Psoas muscle (tissue), 8 donors: ENCODE measurements at regions of chr2 and their contacts with region 1.

Region 1: DNA sequence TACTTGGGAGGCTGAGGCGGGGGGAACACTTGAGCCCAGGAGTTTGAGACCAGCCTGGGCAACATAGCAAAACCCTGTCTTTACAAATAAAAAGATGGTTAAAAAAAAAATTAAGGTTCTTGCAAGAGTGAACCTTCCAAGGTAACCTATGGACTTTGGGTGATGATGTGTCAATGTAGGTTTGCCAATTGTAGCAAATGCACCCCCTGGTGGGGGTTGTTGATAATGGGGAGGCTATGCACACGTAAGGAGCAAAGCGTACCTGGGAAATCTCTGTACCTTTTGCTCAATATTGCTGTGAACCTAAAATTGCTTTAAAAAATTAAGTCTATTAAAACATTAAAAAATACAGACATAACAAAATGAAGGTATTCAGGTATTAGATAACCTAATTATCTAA is 70.4 kb downstream of the CWC22 start:
- DNase-seq: no peak
- ATAC-seq: peak in 3 of 4 donors; percentile 36 to 77 (median 70)
- H3K4me3 ChIP-seq: no peak overlapping the region
- H3K27ac ChIP-seq: no peak overlapping the region
- H3K4me1 ChIP-seq: no peaks in the 10 kb centered on the region
- H3K27me3 ChIP-seq: no peaks in the 10 kb centered on the region
- CTCF ChIP-seq: peak; percentile 56

Region 2: DNA sequence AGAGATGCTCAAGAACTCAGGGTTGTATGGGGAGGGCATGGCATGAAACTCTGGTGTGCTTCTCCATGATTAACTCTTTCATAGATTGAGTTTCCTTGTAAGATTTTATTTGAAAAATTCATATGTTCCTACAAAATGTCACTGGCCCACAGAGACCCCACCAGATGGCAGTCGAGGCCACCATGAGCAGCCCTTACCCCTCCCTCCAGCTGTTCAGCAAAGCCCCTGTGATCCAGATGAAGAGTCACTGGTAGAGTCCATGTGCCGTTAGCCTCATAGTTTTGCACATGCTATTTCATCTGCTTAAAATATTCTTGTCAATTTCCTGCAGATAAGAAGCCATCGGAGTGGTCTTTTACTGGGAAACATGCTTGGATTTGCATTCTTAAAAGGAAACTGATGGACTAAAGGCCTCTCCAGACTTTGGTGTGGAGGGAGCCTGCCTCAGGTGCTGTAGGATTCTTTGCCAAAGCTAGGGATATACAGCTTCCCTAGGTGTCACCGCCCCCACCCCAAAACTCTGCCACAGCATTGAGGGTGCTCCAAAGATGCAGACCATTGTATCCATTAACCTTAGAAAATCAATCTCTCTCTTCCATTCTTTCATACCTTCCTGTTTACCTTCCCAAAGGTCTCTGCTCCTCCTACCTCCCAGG is 94.0 kb before region 1 on chr2:
- intact Hi-C with region 1: loop called in 1 of 2 experiments (anchors 2 kb)
- DNase-seq: peak in 1 of 2 donors; percentile 11
- ATAC-seq: peak; percentile 59 to 82 (median 72)
- H3K4me3 ChIP-seq: no peak overlapping the region
- H3K27ac ChIP-seq: no peak overlapping the region
- H3K4me1 ChIP-seq: peaks cover 5% of the 10 kb centered on the region
- H3K27me3 ChIP-seq: no peaks in the 10 kb centered on the region
- CTCF ChIP-seq: peak; percentile 46

Region 3: DNA sequence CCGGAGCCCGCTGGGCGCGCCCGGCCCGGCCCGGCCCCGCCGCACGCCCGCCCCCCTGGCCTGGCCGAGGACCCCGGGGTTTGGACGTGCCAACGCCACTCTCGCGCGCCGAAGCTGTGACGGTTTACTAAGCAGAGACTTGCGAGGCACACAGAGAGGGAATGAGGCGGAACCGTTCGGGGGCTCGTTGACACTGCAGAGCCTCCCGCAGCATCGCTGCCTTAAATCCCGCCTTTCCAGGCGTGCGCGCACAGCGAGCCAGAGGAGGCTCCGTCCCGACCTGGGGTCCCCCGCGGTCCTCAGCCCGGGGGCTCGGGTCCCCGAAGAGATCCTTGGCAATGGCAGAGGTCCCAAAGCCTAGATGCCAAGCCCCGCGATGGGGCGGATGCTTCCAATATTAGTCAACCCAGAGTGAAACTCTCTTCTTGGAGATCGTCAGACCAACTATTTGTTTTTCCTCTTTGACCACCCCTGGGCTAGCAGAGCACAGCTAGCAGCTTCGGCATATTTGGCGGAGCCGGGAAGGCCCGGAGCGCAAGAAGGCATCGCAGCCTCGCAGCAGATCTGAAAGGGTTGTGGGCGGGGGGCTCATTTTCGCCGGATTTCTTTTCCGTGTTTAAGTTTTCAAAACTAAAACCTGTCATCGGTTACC is 75.1 kb before region 1 on chr2 and contains the start of gene ZNF385B:
- intact Hi-C with region 1: loop called in 1 of 2 experiments (anchors 5 kb)
- DNase-seq: peak; percentile 14 to 58
- ATAC-seq: peak in 3 of 4 donors; percentile 2 to 61 (median 21)
- H3K4me3 ChIP-seq: peak within 1 kb of the TSS; percentile 81
- H3K27ac ChIP-seq: peak within 1 kb of the TSS; percentile 80
- H3K4me1 ChIP-seq: peaks cover 15% of the 10 kb centered on the region
- H3K27me3 ChIP-seq: peaks cover 0 to 3% (median 0%) of the 10 kb centered on the region in 3 donors
- CTCF ChIP-seq: no peak
- total RNA-seq, gene ZNF385B: 13.6 to 42.9 (median 19.8) TPM